Activated CD4-positive, alpha-beta memory T cell treated with anti-CD3 and anti-CD28 coated beads for 36 hours (primary cell): ENCODE measurements at regions of chr1 and their contacts with region 1.

Region 1: DNA sequence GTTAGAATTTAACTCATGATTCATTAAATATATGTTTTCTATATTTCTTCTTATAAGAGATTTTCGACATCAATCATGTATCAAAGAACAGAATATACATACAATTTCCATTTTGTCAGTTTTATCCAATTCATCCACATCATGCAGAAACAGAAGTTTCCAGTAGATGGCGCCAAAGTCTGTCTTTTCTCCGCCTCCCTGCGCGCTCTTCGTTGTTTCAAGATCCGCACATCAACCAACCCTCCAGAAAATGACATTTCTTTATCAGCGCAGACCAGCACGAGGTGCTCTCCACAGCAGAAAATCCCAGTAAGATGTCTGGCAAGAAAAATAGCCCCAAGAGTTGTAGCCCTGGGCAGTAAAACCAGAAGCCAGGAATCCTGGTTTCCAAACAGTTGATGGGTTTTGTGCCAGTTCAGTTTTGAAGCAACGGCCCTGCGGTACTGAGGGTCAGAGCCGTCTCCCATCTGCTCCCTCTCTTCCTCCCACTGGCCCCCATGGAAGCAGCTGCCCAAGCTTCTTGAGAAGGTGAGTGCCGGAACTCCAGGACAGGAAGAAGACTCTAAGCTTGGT is 38.6 kb upstream of the GPR137B start:
- DNase-seq: peak; percentile 69
- H3K4me3 Mint-ChIP-seq: no peak overlapping the region
- H3K27ac Mint-ChIP-seq: no peak overlapping the region
- H3K4me1 Mint-ChIP-seq: peaks cover 5% of the 10 kb centered on the region
- H3K27me3 Mint-ChIP-seq: no peaks in the 10 kb centered on the region

Region 2: GRCh38 chr1:236142253-236143103 is 38.7 kb after region 1 on chr1 and contains the start of gene GPR137B:
- CTCF ChIA-PET with region 1: interaction called, 3 read pairs
- POLR2A ChIA-PET with region 1: no interaction called
- intact Hi-C with region 1: loop called (anchors 5 kb)
- DNase-seq: peak; percentile 78
- H3K4me3 Mint-ChIP-seq: peak within 1 kb of the TSS; percentile 94
- H3K27ac Mint-ChIP-seq: peak within 1 kb of the TSS; percentile 78
- H3K4me1 Mint-ChIP-seq: peaks cover 21% of the 10 kb centered on the region
- H3K27me3 Mint-ChIP-seq: peaks cover 27% of the 10 kb centered on the region
- total RNA-seq, gene GPR137B: 5.6 TPM

Region 3: GRCh38 chr1:236489710-236490377 is 386.1 kb after region 1 on chr1:
- CTCF ChIA-PET with region 1: interaction called, 17 read pairs
- POLR2A ChIA-PET with region 1: no interaction called
- intact Hi-C with region 1: loop called (anchors 1 kb)
- DNase-seq: no peak
- H3K4me3 Mint-ChIP-seq: no peak overlapping the region
- H3K27ac Mint-ChIP-seq: no peak overlapping the region
- H3K4me1 Mint-ChIP-seq: peaks cover 22% of the 10 kb centered on the region
- H3K27me3 Mint-ChIP-seq: peaks cover 7% of the 10 kb centered on the region

Region 4: GRCh38 chr1:236868625-236869467 is 765.1 kb after region 1 on chr1:
- CTCF ChIA-PET with region 1: interaction called, 5 read pairs
- POLR2A ChIA-PET with region 1: no interaction called
- intact Hi-C with region 1: loop called (anchors 10 kb)
- DNase-seq: peak; percentile 57
- H3K4me3 Mint-ChIP-seq: no peak overlapping the region
- H3K27ac Mint-ChIP-seq: no peak overlapping the region
- H3K4me1 Mint-ChIP-seq: no peaks in the 10 kb centered on the region
- H3K27me3 Mint-ChIP-seq: no peaks in the 10 kb centered on the region

Region 5: DNA sequence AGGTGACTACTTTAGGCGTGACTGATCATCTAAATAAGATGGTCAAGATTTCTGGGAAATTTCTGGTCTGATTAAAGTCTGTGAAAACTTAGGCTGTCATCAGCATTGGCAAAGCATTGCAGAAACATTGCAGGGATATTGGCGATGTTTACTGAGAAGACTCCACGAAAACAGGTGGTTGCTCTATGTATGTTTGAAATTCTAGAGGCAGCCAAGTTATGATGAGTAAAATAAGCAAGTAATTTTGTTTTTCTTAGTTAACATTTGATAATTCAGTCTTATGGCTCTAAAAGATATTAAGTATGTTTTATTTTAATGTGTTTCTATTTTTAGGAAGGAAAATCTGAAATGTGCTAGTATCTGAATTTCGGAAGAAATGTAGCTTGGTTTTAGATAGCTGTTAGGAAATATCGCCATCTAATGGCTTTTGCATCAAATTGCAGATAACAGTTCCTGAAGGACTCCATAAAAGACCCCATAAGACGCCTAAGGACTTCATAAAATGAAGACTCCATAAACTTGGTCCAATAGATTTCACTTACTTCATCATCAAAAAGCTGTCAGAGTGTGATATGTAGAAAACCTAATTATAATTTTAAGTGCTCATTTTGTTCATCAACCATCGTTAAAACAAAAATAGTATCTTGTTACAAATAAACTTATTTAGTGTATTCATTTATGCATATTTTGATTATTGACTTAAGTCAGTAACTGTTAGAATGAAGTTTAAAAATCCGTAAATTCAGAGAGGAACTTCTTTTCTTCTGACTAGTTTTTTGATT is 1282.8 kb after region 1 on chr1:
- CTCF ChIA-PET with region 1: no interaction called
- POLR2A ChIA-PET with region 1: no interaction called
- intact Hi-C with region 1: loop called (anchors 10 kb)
- DNase-seq: no peak
- H3K4me3 Mint-ChIP-seq: no peak overlapping the region
- H3K27ac Mint-ChIP-seq: no peak overlapping the region
- H3K4me1 Mint-ChIP-seq: no peaks in the 10 kb centered on the region
- H3K27me3 Mint-ChIP-seq: peaks cover 4% of the 10 kb centered on the region

Region 6: GRCh38 chr1:237562242-237562823 is 1458.6 kb after region 1 on chr1:
- CTCF ChIA-PET with region 1: interaction called, 7 read pairs
- POLR2A ChIA-PET with region 1: no interaction called
- intact Hi-C with region 1: loop called (anchors 5 kb)
- DNase-seq: no peak
- H3K4me3 Mint-ChIP-seq: no peak overlapping the region
- H3K27ac Mint-ChIP-seq: no peak overlapping the region
- H3K4me1 Mint-ChIP-seq: no peaks in the 10 kb centered on the region
- H3K27me3 Mint-ChIP-seq: peaks cover 17% of the 10 kb centered on the region